GM10248 (cell line): ENCODE measurements at regions of chr7 and their contacts with region 1.

Region 1: DNA sequence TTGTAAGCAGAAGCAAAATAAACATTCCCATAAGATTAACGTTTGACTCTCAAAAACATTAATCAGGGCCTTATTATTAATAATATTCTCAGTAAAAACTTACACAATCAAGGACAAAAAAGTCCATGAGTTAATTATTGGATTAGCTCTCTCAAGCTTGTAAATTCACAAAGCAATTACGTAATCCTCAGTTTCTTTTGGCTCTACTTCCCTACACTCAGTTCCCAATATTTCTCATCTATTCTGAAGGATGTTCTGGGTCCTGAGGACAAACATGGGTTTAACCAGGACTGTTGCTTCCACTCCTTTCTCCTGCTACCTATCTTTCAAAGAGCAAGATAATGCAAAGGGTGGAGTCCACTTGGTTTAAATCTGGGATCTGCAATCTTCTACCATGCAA is 15.1 kb downstream of the FBXL13 start:
- DNase-seq: no peak
- CTCF ChIP-seq: no peak

Region 2: DNA sequence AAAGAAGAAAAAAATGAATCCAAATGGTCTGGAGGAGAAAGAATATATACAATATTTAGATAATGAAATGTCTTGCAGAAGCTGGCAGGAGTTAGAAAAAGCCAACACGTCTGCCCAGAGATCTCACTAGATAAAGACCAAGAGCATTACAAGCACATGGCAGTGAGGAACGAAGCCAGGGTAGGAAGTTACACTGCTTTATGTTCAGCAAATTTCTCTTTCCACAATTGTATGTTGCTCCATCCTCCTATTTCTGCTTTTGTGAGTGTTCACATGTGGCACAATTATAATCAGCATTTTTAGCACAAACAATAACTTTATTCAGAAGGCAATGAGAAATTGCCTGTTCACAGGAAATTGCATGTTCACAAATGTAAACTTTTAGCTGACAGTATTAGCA is 93.0 kb before region 1 on chr7:
- CTCF ChIA-PET with region 1: no interaction called
- POLR2A ChIA-PET with region 1: no interaction called
- DNase-seq: no peak
- CTCF ChIP-seq: no peak

Region 3: DNA sequence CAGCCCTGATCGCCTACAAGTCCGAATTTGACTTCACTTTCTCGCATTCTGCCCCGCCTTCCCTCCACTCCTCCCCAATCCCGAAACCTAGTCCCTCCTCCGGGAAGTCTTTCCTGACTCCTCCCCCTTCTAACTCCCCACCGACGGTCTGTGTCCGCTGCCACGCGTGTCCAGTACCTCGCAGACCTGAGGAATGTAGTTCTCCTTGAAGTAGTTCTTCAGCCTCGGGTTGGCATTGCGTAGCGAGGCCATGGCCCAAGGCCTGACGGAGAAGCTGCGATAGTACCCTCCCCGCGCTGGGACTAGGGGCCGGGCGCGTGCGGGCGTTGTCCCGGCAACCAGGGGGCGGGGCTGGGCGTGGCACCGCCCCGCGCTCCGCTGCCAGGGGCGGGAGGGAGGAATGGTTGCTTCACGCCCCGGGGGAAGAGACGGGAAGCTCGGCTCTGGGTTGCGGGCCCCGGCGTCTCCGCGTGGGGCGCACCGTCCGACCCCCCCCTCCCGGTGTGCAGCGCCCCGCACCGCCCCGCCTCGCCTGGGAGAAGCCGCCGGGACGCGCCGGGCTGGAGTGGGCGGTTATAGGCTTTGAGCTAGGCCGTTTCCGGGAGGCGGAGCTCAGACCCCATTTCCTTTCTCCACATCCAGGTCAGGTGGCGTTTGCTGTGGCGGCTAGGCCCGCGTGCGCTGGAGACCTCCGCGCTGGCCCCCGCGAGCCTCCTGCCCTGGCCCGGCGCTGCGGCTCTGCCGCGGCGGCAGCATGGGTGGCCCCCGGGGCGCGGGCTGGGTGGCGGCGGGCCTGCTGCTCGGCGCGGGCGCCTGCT is 15.3 kb after region 1 on chr7 and contains the starts of genes ARMC10 and FBXL13:
- CTCF ChIA-PET with region 1: interaction called, 62 read pairs
- POLR2A ChIA-PET with region 1: no interaction called
- DNase-seq: peak; percentile 93
- CTCF ChIP-seq: no peak